ENCODE measurements at regions of chr1 and their contacts with region 1.

Region 1: GRCh38 chr1:203340112-203340804 is 10.7 kb downstream of the FMOD start:
- DNase-seq: peak; percentile 67 to 75
- H3K4me3 ChIP-seq: no peak overlapping the region
- H3K27ac ChIP-seq: no peak overlapping the region
- H3K4me1 ChIP-seq: no peaks in the 10 kb centered on the region
- H3K27me3 ChIP-seq: peaks cover 32% of the 10 kb centered on the region
- CTCF ChIP-seq: peak; percentile 90

Region 2: DNA sequence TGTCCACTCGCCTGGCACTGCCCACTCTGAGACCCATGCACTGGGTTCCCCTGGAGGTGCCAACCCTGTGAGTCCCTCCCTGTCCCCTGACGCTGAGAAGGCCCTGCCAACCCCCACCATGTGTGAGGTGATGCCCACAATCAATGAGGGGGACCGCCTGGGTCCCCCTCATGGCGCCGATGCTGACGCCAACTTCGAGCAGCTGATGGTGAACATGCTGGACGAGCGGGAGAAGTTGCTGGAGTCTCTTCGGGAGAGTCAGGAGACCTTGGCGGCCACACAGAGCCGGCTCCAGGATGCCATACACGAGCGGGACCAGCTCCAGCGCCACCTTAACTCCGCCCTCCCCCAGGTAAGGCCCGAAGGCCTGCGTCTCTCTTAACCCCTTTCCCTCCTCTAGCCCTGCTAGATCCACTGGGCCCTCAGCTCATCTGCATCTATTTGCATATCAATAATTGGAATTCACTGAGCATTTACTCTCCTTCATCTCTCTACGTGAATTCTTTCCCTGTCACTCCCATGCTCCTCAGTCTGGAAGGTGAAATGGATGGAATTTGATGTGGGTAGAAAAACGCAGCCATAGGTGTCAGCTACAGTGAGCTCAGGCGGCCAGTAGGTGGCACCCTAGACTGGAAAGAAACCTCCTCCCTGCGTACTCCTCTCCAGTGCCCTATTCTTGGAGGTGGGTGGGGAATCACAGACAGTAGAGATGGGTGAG is 301.2 kb before region 1 on chr1:
- CTCF ChIA-PET with region 1: interaction called, 10 read pairs
- POLR2A ChIA-PET with region 1: interaction called, 3 read pairs
- intact Hi-C with region 1: no loop called
- DNase-seq: peak; percentile 44 to 55
- H3K4me3 ChIP-seq: no peak overlapping the region
- H3K27ac ChIP-seq: no peak overlapping the region
- H3K4me1 ChIP-seq: no peaks in the 10 kb centered on the region
- H3K27me3 ChIP-seq: peaks cover 5% of the 10 kb centered on the region; the same call in 1 of the 2 replicates
- CTCF ChIP-seq: peak; percentile 95

Region 3: GRCh38 chr1:203273206-203273868 is 66.9 kb before region 1 on chr1:
- CTCF ChIA-PET with region 1: interaction called, 14 read pairs
- POLR2A ChIA-PET with region 1: no interaction called
- intact Hi-C with region 1: loop called (anchors 1 kb)
- DNase-seq: peak; percentile 72 to 86
- H3K4me3 ChIP-seq: no peak overlapping the region
- H3K27ac ChIP-seq: no peak overlapping the region
- H3K4me1 ChIP-seq: no peaks in the 10 kb centered on the region
- H3K27me3 ChIP-seq: no peaks in the 10 kb centered on the region
- CTCF ChIP-seq: peak; percentile 95

Region 4: DNA sequence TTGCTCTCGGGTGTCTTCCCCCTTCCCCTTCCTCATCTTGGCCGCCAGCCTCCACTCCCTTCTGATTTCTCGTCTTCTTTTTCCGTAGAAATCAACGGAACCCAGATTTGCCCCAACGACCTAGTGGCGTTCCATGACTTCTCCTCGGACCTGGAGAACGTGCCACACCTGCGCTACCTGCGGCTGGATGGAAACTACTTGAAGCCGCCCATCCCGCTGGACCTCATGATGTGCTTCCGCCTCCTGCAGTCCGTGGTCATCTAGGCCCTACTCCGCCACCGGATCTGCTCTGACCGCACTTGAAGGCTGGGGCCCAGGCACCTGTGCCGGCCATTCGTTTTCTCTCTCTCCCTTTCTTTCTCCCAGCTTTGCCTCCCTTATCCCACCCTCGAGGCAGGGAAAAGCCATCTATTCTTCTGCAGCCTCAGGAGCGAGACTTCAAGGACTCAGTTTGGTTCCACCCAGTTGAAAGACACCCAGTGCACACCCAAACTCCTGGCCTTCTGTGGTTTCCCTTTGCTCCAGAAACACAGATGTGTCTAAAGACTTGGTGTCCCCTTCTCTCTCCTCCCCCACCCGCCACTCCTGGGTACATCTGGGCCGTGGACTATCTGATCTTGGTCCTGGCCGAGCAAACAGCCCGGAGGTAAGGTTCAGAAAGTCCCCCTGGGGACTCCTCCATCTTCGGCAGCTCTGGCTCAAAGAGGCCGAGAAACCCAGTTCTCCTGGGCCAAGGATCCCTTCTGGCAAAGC is 146.5 kb after region 1 on chr1:
- CTCF ChIA-PET with region 1: interaction called, 5 read pairs
- POLR2A ChIA-PET with region 1: no interaction called
- intact Hi-C with region 1: loop called (anchors 1 kb)
- DNase-seq: no peak
- H3K4me3 ChIP-seq: peak overlapping the region; percentile 56; the same call in 1 of the 2 replicates
- H3K27ac ChIP-seq: no peak overlapping the region
- H3K4me1 ChIP-seq: peaks cover 4% of the 10 kb centered on the region
- H3K27me3 ChIP-seq: no peaks in the 10 kb centered on the region
- CTCF ChIP-seq: no peak

Region 5: GRCh38 chr1:203504397-203505250 is 164.4 kb after region 1 on chr1:
- CTCF ChIA-PET with region 1: no interaction called
- POLR2A ChIA-PET with region 1: no interaction called
- intact Hi-C with region 1: loop called (anchors 1 kb)
- DNase-seq: peak; percentile 65 to 78
- H3K4me3 ChIP-seq: no peak overlapping the region
- H3K27ac ChIP-seq: no peak overlapping the region
- H3K4me1 ChIP-seq: peaks cover 15% of the 10 kb centered on the region
- H3K27me3 ChIP-seq: no peaks in the 10 kb centered on the region
- CTCF ChIP-seq: peak; percentile 95

Region 6: GRCh38 chr1:203702130-203702577 is 361.9 kb after region 1 on chr1:
- CTCF ChIA-PET with region 1: interaction called, 4 read pairs
- POLR2A ChIA-PET with region 1: no interaction called
- intact Hi-C with region 1: loop called (anchors 1 kb)
- DNase-seq: peak; percentile 39 to 49
- H3K4me3 ChIP-seq: no peak overlapping the region
- H3K27ac ChIP-seq: no peak overlapping the region
- H3K4me1 ChIP-seq: no peaks in the 10 kb centered on the region
- H3K27me3 ChIP-seq: no peaks in the 10 kb centered on the region
- CTCF ChIP-seq: peak; percentile 99

Region 7: GRCh38 chr1:203754455-203754864 is 414.2 kb after region 1 on chr1:
- CTCF ChIA-PET with region 1: interaction called, 14 read pairs
- POLR2A ChIA-PET with region 1: no interaction called
- intact Hi-C with region 1: no loop called
- DNase-seq: no peak
- H3K4me3 ChIP-seq: no peak overlapping the region
- H3K27ac ChIP-seq: no peak overlapping the region
- H3K4me1 ChIP-seq: peaks cover 13% of the 10 kb centered on the region
- H3K27me3 ChIP-seq: no peaks in the 10 kb centered on the region
- CTCF ChIP-seq: no peak